HepG2 (cell line): ENCODE measurements at regions of chr6 and their contacts with region 1.

Region 1: DNA sequence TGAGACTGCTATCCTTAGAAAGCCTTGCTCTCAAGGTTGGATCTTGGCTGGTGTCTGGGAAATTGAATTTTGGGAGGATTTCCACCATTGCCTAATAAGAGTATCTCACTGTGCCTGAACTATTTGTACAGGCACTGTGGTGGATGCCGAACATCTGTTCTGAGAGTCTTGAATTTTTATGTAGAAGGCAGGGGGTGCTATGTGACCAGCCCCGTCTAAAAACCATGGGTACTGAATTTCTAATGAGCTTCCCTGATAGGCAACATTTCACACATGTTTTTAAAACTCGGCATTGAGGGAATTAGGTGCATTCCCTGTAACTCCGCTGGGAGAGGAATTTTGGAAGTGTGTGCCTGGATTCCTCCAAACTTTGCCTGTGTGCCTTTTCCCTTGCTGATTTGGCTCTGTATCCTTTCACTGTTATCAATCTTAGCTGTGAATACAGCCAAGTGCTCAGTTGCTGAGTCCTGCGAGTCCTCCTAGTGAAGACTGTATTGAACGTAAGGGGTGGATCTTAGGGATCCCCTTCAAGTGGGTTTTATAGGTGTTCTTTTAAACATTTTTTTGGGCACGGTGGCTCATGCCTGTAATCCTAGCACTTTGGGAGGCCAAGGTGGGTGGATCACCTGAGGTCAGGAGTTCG is 27.6 kb upstream of the SCAF8 start:
- DNase-seq: no peak
- ATAC-seq: no peak; the same call in 2 of the 3 replicates
- H3K4me3 ChIP-seq: no peak overlapping the region
- H3K27ac ChIP-seq: no peak overlapping the region
- H3K4me1 ChIP-seq: no peaks in the 10 kb centered on the region
- H3K27me3 ChIP-seq: no peaks in the 10 kb centered on the region; a peak in 1 of 5 replicates
- CTCF ChIP-seq: 0 out of 2 replicates have a peak, but pooled peaks have one; percentile 12
- EP300 ChIP-seq: no peak
- POLR2A ChIP-seq: no peak
- RAD21 ChIP-seq: no peak

Region 2: DNA sequence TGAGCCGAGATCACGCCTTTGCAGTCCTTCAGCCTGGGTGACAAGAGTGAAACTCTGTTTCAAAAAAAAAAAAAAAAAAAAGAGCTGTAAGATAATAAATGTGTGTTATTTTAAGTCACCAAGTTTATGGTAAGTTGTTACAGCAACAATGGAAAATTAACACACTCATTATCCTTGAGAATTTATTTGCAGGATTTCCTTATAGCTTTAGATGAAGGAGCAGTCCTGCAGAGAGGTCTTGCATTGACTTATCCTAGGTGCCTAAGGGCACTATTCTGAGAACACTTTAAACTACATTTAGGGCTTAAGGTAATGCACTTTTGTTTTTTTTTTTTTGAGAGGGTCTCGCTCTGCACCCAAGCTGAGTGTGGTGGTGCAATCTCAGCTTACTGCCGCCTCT is 13.8 kb after region 1 on chr6:
- CTCF ChIA-PET with region 1: no interaction called
- POLR2A ChIA-PET with region 1: no interaction called
- in situ Hi-C with region 1: no loop called
- intact Hi-C with region 1: loop called (anchors 2 kb)
- DNase-seq: no peak
- ATAC-seq: no peak
- H3K4me3 ChIP-seq: no peak overlapping the region
- H3K27ac ChIP-seq: no peak overlapping the region
- H3K4me1 ChIP-seq: no peaks in the 10 kb centered on the region
- H3K27me3 ChIP-seq: no peaks in the 10 kb centered on the region; a peak in 1 of 5 replicates
- CTCF ChIP-seq: no peak
- EP300 ChIP-seq: no peak
- POLR2A ChIP-seq: no peak
- RAD21 ChIP-seq: no peak

Region 3: DNA sequence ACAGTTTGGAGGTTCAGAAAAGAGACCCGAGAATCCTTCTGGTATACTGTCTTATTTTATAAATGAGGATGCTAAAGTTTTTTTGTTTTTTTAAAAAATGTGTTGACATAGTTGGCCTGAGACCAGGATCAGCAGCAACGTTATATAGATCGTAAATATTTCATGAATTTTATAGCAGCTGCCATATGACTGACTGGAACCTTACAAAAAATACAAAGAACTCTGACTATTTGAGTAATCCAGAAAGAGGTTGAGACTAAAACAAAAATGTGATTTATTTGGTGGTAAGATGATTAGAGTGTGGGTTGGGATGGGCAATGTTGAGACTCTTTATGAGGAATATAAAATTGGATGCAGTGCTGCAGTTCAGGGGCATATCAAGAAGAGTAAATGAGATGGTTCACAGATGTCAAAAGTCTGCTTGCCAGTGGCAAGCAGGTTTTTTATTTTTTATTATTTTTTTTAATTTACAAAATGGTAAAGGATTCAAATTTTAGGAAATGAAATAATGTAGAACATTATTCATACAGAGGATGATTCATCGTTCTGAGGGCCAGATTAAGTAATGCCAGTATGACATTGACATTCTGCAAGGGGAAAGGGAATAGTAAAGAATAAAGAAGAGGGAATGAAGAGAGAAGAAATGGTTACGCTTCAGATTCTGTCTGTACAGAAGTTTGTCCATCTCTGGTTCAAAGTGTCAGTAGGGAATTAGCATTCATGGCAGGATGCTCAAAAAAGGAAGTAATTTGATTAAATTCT is 86.1 kb after region 1 on chr6:
- CTCF ChIA-PET with region 1: no interaction called
- POLR2A ChIA-PET with region 1: no interaction called
- in situ Hi-C with region 1: no loop called
- intact Hi-C with region 1: no loop called
- DNase-seq: no peak
- ATAC-seq: no peak
- H3K4me3 ChIP-seq: no peak overlapping the region
- H3K27ac ChIP-seq: no peak overlapping the region
- H3K4me1 ChIP-seq: no peaks in the 10 kb centered on the region
- H3K27me3 ChIP-seq: no peaks in the 10 kb centered on the region
- CTCF ChIP-seq: no peak
- EP300 ChIP-seq: no peak
- POLR2A ChIP-seq: no peak
- RAD21 ChIP-seq: no peak